ENCODE measurements at regions of chr12 and their contacts with region 1.

Region 1: DNA sequence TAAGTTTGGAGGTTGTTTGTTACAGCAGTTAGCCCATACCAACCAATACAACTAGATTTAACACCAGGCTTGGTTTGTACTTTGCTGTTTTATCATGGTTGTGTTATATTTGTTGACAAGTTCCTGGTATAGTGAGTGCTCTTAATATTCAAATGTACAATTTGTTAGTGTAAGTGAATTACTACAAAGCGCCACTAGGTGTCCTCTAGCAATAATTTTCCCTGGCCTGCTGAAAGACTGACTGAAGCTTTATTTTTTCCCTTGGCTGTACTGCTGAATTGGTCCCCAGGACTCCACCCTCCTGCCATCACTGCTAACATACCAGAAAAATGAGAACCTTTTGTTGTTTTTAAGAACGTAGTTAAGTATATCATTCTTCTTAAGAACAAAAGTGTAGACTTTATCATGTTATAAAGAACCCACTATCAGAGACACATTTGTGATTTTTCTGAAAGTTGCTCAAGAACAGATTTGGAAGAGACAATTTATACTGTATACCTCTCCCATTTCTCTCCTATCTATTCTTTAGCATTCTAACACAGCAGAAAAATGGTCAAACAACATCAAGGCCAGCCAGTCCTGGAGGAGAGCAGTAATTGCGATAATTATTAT is 75.3 kb upstream of the FAR2 start:
- DNase-seq: no peak
- ATAC-seq: peak; percentile 87
- H3K4me3 ChIP-seq: no peak overlapping the region
- H3K27ac ChIP-seq: no peak overlapping the region
- H3K4me1 ChIP-seq: no peaks in the 10 kb centered on the region
- H3K27me3 ChIP-seq: no peaks in the 10 kb centered on the region
- CTCF ChIP-seq: peak; percentile 54 to 68 (median 67); a peak in 5 of 6 replicates
- EP300 ChIP-seq: no peak
- POLR2A ChIP-seq: no peak
- RAD21 ChIP-seq: peak; percentile 68

Region 2: DNA sequence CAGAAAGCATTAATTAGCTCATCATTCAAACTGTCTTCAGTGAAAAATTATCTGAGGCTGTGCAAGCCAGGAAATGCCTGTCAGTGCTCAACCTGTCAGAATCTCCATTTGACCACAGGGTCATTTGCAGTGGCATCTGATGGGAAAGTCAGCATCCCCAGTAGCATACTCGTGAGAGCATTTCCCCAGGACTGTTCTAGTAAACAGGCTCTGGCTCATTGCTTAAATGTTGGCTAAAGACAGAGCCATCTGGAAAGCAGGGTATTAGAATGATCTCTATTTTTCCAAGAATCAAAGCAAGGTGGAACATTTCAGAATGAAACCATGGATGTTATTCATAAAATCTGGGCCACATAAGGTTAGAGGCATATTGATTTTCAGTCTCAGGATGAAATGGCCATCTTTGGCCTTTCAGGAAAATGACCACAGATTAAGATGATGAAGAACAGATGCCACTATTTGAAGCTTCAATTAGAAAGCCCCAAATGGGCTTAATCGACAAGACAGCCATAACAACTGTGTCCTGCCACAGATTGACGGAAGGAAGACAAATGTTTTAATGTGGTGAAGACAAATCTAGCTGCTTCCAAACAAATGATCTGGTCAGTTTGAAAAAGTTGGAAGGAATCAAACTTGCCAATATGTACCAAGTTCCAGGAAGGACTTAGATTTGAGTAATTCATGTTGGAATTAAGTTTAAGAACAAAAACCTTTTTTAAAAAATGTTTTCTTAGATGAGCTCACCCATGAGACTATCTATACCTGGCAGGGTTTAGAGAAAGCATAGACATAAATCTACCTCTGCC is 18.7 kb before region 1 on chr12:
- CTCF ChIA-PET with region 1: interaction called, 6 read pairs
- POLR2A ChIA-PET with region 1: no interaction called
- RAD21 ChIA-PET with region 1: no interaction called
- SMC1A ChIA-PET with region 1: interaction called, 10 read pairs
- in situ Hi-C with region 1: no loop called
- intact Hi-C with region 1: no loop called
- DNase-seq: no peak
- ATAC-seq: no peak
- H3K4me3 ChIP-seq: no peak overlapping the region
- H3K27ac ChIP-seq: no peak overlapping the region
- H3K4me1 ChIP-seq: no peaks in the 10 kb centered on the region
- H3K27me3 ChIP-seq: no peaks in the 10 kb centered on the region
- CTCF ChIP-seq: no peak
- EP300 ChIP-seq: no peak
- POLR2A ChIP-seq: no peak
- RAD21 ChIP-seq: no peak

Region 3: GRCh38 chr12:29088611-29089219 is 15.0 kb after region 1 on chr12:
- CTCF ChIA-PET with region 1: interaction called, 69 read pairs
- POLR2A ChIA-PET with region 1: no interaction called
- RAD21 ChIA-PET with region 1: interaction called, 34 read pairs
- SMC1A ChIA-PET with region 1: interaction called, 30 read pairs
- in situ Hi-C with region 1: no loop called
- intact Hi-C with region 1: no loop called
- DNase-seq: no peak
- ATAC-seq: 0 out of 3 replicates have a peak, but pooled peaks have one; percentile 21
- H3K4me3 ChIP-seq: no peak overlapping the region
- H3K27ac ChIP-seq: no peak overlapping the region
- H3K4me1 ChIP-seq: peaks cover 6% of the 10 kb centered on the region; the same call in 1 of the 2 replicates
- H3K27me3 ChIP-seq: no peaks in the 10 kb centered on the region
- CTCF ChIP-seq: peak; percentile 27 to 35 (median 35); a peak in 3 of 6 replicates
- EP300 ChIP-seq: no peak
- POLR2A ChIP-seq: no peak
- RAD21 ChIP-seq: peak; percentile 61

Measured in GM12878 (cell line).